AG04449 (cell line): ENCODE measurements at regions of chrX and their contacts with region 1.

Region 1: GRCh38 chrX:136028251-136028984 is 43.2 kb downstream of the SLC9A6 start:
- DNase-seq: no peak
- H3K4me3 ChIP-seq: no peak overlapping the region
- CTCF ChIP-seq: peak; percentile 19

Region 2: DNA sequence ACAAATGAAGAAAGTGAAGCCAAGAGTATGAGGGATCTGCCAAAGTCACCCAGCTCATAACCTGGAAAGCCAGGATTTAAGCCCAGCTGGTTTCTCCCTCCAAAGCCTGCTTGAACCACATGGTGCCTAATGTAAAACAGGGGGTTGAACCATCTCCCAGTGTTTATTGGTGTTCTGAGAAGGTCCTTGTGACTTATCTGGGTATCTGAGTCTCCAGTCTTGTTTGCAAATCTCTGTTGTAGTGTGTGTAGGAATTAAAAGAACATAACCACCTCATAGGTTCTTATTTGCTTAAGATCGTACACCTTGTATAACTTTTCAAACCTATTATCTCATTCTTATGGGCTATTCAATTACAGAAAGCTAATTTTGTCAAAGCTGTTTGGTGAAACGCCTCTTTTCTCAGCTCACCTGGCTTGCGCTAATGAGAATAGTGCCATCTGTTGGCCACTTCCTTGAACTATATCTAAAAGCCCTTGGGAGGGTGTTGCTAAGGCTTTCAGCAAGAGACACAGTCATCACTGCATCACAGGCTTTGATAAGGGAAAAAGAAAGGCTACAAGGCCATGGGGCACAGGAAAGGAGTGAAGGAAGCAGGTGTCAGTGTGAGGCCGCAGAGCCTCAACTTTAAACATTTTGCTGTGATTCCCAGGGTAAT is 942.1 kb before region 1 on chrX:
- CTCF ChIA-PET with region 1: no interaction called
- POLR2A ChIA-PET with region 1: no interaction called
- DNase-seq: peak; percentile 2
- H3K4me3 ChIP-seq: no peak overlapping the region
- CTCF ChIP-seq: peak; percentile 34

Region 3: DNA sequence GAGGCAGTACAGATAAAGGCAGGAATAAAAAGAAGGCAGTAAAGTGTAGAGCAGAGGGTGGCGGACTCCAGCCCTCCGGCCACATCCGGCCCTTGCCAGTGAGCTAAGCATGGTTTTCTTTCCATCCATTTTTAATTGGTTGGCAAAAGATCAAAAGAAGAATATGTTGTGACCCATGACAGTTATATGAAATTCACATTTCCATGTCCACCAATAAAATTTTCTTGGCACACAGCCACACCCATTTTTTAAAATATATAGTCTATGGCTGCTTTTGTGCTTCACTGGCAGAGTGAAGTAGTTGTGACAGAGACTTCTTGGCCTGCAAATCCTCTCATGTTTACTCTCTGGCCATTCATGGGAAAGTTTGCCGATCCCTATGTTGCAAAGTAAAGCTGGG is 13.4 kb before region 1 on chrX:
- CTCF ChIA-PET with region 1: interaction called, 17 read pairs
- POLR2A ChIA-PET with region 1: no interaction called
- DNase-seq: no peak
- H3K4me3 ChIP-seq: no peak overlapping the region
- CTCF ChIP-seq: no peak

Region 4: GRCh38 chrX:136154998-136155397 is 126.6 kb after region 1 on chrX:
- CTCF ChIA-PET with region 1: interaction called, 210 read pairs
- POLR2A ChIA-PET with region 1: no interaction called
- DNase-seq: no peak
- H3K4me3 ChIP-seq: no peak overlapping the region
- CTCF ChIP-seq: no peak

Region 5: DNA sequence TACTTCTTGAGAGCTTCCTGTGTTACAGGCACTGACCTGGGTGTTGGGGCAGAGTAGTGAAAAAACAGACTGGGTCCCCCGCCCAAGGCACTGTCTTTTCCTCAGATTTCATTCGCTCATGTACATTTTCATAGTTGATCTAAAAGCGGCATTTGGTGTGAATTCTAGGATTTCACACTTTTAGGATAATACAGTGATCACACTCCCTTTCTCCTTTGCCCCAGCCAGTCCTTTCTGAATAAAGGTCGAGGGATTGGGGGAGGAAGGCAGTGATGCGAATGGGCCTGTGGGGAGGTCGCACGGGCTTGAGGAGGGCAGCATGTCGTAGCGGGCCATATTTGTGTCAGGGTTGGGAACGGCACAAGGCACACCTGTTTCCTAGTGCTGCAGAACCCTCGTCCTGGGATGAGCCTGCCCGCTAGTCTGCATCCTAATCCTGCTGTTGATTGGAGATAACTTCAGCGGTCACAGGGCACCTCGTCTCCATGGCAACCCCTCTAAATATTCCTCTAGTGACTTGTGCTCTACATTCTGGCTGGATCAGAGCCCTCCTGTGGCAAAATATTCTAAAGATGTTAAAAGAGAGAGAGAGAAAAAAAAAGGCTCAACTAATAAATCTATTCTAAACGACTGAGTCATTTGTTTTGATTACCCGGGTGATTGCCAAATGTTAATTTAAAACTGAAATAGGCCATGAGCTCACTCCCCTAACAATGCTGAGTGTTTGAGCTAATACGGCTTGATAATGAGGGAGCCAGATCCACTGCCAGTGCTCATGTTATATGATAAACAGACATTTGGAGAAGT is 140.7 kb after region 1 on chrX:
- CTCF ChIA-PET with region 1: interaction called, 210 read pairs
- POLR2A ChIA-PET with region 1: interaction called, 6 read pairs
- DNase-seq: peak; percentile 90
- H3K4me3 ChIP-seq: no peak overlapping the region
- CTCF ChIP-seq: no peak

Region 6: DNA sequence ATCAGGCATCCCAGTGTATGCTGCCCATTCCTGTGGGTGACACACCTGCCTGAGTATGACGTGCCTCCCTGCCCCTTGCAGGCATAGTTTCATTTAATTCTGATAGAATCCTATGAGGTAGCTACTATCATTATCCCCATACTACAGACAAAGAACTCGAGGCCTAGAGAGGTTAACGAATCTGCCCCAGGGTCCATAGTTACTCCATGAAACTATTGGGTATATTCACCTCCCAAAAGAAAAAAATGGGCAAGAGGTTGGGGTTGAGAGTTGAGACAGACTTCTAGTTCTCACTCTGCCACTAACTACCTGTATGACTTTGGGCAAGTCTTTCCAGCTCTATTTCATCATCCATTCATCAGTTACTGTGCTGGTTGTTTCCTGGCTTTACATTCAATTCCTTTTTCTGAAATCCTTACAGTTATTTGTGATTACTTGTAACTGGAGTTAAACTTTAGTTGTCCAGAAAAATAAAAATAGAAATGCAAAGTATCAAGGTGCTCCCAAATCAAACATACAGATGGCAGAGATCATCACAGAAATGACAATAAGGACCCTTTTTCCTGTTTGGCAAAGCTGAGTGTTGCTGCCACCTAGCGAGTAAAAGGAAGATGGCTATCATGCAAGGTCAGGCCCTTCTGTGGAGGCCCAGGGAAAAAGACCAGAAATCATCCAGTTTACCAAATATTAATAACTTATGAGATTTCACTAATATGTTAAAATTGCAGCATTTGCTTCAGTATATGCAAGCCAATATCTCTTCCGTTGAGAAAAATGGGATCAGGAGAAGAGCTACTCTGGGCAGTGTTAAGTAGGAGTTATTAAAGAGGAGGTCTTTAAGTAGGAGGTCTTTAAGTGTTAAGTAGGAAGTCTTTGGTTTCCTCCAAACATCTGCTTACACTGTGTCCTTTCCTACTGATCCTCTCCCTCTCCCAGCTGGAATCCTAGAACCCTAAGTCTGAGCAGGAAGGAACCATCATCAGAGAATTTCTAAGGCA is 239.9 kb after region 1 on chrX:
- CTCF ChIA-PET with region 1: interaction called, 72 read pairs
- POLR2A ChIA-PET with region 1: no interaction called
- DNase-seq: no peak
- H3K4me3 ChIP-seq: no peak overlapping the region
- CTCF ChIP-seq: peak; percentile 57

Region 7: DNA sequence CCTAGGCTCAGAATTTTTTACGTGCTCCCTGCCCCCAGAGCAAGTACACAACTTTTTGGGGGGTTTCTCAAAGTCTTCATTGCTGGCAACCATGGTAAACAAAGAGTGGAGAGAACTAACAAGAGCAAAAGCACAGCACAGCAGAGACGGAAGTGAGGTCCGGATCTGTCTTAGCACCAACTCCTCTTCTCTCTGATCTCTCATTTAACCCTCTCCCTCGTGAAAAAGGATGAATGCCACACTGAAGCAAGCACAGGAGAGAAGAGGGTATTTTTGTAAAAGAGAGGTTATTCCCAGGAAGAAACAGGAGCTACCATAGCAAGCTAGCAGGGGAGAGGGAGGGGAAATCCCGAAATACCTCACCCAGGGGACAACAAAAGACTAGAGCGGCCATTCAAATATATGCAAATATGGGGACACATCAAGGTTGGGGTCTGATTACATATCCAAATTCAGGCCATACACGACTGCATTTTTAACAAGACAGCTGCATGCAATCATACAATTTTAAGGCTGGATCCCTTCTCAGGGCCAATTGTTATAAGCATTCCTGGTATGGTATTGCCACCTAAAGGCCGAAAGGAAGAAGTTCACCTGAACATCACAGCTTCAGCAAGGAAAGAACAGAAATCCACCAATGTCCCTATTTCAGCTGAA is 666.1 kb after region 1 on chrX:
- CTCF ChIA-PET with region 1: interaction called, 14 read pairs
- POLR2A ChIA-PET with region 1: no interaction called
- DNase-seq: no peak
- H3K4me3 ChIP-seq: no peak overlapping the region
- CTCF ChIP-seq: peak; percentile 45